ENCODE measurements at regions of chr17 and their contacts with region 1.

Region 1: DNA sequence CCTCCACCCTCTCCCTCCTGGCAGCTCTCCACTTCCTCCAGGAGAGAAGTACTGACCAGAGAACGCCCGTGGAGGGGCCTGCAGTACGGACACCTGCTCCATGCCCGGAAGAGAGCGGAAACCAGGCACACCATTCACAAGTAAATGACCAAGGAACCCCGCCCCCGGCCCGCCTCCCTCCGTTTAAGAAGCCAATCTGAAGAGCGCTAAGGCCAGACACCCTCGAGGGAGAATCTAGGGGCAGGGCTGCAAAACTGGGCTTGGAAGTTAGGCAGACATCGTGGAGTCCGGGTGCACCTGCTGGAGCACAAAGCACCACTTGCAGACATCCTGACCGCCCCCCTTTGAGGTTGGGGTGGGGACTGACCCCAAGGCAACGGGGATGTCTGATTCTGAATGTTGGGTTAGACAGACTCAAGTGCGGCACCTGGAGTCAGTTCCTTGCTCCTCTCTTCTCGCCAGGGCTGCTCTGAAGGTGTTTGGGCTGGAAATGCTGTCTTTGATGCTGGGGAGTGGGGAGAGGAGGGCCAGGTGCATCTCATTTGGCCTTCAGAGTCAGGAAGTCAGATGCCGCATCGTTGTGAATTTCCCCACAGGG is 964 bp upstream of the FAAP100 start:
- DNase-seq: peak; percentile 62 to 64 (median 63)
- H3K4me3 ChIP-seq: peak overlapping the region; percentile 79 to 93 (median 92)
- H3K4me3 Mint-ChIP-seq: peak overlapping the region; percentile 87 to 91
- H3K27ac ChIP-seq: peak overlapping the region; percentile 71 to 83
- H3K27ac Mint-ChIP-seq: peak overlapping the region; percentile 86 to 94 (median 93)
- H3K4me1 ChIP-seq: peaks cover 34 to 56% of the 10 kb centered on the region in 2 donors
- H3K4me1 Mint-ChIP-seq: peaks cover 47% of the 10 kb centered on the region
- H3K27me3 ChIP-seq: no peaks in the 10 kb centered on the region
- H3K27me3 Mint-ChIP-seq: peaks cover 0 to 1% (median 0%) of the 10 kb centered on the region in 3 donors
- CTCF ChIP-seq: no peak

Region 2: GRCh38 chr17:81119223-81120148 is 433.6 kb before region 1 on chr17:
- intact Hi-C with region 1: no loop called
- DNase-seq: peak; percentile 78 to 97 (median 86)
- H3K4me3 ChIP-seq: no peak overlapping the region
- H3K4me3 Mint-ChIP-seq: peak overlapping the region in 1 of 2 donors; percentile 52
- H3K27ac ChIP-seq: no peak overlapping the region
- H3K27ac Mint-ChIP-seq: peak overlapping the region in 5 of 7 donors; percentile 26 to 88 (median 80)
- H3K4me1 ChIP-seq: peaks cover 6 to 8% of the 10 kb centered on the region in 2 donors
- H3K4me1 Mint-ChIP-seq: peaks cover 7% of the 10 kb centered on the region
- H3K27me3 ChIP-seq: no peaks in the 10 kb centered on the region
- H3K27me3 Mint-ChIP-seq: peaks cover 0 to 2% (median 0%) of the 10 kb centered on the region in 3 donors
- CTCF ChIP-seq: no peak

Region 3: GRCh38 chr17:81519284-81519955 is 33.7 kb before region 1 on chr17:
- intact Hi-C with region 1: loop called (anchors 2 to 5 kb)
- DNase-seq: peak; percentile 62 to 80 (median 69)
- H3K4me3 ChIP-seq: peak overlapping the region in 2 of 3 experiments; percentile 21 to 77
- H3K4me3 Mint-ChIP-seq: peak overlapping the region in 1 of 2 donors; percentile 46
- H3K27ac ChIP-seq: peak overlapping the region in 1 of 2 donors; percentile 48
- H3K27ac Mint-ChIP-seq: peak overlapping the region in 4 of 7 donors; percentile 5 to 72 (median 69)
- H3K4me1 ChIP-seq: peaks cover 51 to 65% of the 10 kb centered on the region in 2 donors
- H3K4me1 Mint-ChIP-seq: peaks cover 36% of the 10 kb centered on the region
- H3K27me3 ChIP-seq: peaks cover 0 to 32% of the 10 kb centered on the region in 2 donors
- H3K27me3 Mint-ChIP-seq: peaks cover 22 to 44% (median 34%) of the 10 kb centered on the region in 3 donors
- CTCF ChIP-seq: peak; percentile 40